Psoas muscle (tissue), 8 donors: ENCODE measurements at regions of chr10 and their contacts with region 1.

Region 1: GRCh38 chr10:22259280-22259679 is 41.5 kb upstream of the EBLN1 start:
- DNase-seq: no peak
- ATAC-seq: peak in 1 of 4 donors; percentile 37
- H3K4me3 ChIP-seq: no peak overlapping the region
- H3K27ac ChIP-seq: no peak overlapping the region
- H3K4me1 ChIP-seq: no peaks in the 10 kb centered on the region
- H3K27me3 ChIP-seq: peaks cover 0 to 7% (median 4%) of the 10 kb centered on the region in 3 donors
- CTCF ChIP-seq: no peak

Region 2: GRCh38 chr10:22228943-22229801 is 30.1 kb before region 1 on chr10:
- intact Hi-C with region 1: no loop called
- DNase-seq: peak; percentile 83 to 92
- ATAC-seq: peak; percentile 98 to 99 (median 98)
- H3K4me3 ChIP-seq: peak overlapping the region; percentile 82
- H3K27ac ChIP-seq: peak overlapping the region; percentile 91
- H3K4me1 ChIP-seq: no peaks in the 10 kb centered on the region
- H3K27me3 ChIP-seq: no peaks in the 10 kb centered on the region
- CTCF ChIP-seq: no peak

Region 3: GRCh38 chr10:22301193-22301592 is 41.9 kb after region 1 on chr10:
- intact Hi-C with region 1: loop called in 1 of 2 experiments (anchors 5 kb)
- DNase-seq: no peak
- ATAC-seq: no peak
- H3K4me3 ChIP-seq: no peak overlapping the region
- H3K27ac ChIP-seq: no peak overlapping the region
- H3K4me1 ChIP-seq: no peaks in the 10 kb centered on the region
- H3K27me3 ChIP-seq: no peaks in the 10 kb centered on the region
- CTCF ChIP-seq: no peak

Region 4: GRCh38 chr10:22466763-22467334 is 207.6 kb after region 1 on chr10:
- intact Hi-C with region 1: no loop called
- DNase-seq: no peak
- ATAC-seq: no peak
- H3K4me3 ChIP-seq: no peak overlapping the region
- H3K27ac ChIP-seq: no peak overlapping the region
- H3K4me1 ChIP-seq: no peaks in the 10 kb centered on the region
- H3K27me3 ChIP-seq: peaks cover 0 to 1% (median 0%) of the 10 kb centered on the region in 3 donors
- CTCF ChIP-seq: no peak